ENCODE measurements at regions of chr7 and their contacts with region 1.

Region 1: GRCh38 chr7:134355927-134356326 is 39.2 kb upstream of the SLC35B4 start:
- DNase-seq: no peak

Region 2: DNA sequence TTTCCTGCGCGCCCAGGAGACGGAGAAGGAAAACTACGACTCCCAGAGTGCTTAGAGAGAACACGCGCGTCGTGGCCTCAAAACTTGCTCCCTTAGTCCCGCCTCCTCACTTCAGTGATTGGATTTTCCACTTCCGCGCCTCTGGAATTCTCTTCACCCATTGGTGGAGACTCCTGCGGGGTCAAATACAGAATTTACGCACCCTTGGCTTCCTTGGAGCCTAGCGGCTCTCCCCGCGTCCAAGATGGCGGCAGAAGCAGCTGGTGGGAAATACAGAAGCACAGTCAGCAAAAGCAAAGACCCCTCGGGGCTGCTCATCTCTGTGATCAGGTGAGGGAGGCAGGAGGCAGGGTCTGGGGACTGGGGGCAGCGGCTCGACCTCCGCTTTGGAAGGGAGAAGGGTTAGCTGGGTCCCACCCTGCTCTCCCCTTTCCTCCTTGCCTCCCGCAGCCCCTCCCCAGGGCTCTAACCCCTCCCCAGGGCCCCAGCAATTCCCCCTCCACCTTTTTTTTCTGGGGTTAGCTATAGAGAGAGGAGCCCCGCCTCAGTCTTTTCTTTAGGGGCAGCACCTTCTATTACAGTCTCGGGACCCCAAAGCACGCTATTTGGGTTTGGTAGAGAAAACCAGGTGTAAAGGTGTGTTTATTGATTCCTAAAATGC is 1102.9 kb before region 1 on chr7 and contains the start of gene EXOC4:
- intact Hi-C with region 1: no loop called
- DNase-seq: peak; percentile 94
- total RNA-seq, gene EXOC4: 66.0 to 70.6 TPM

Region 3: GRCh38 chr7:134613623-134614347 is 257.9 kb after region 1 on chr7:
- intact Hi-C with region 1: loop called in 1 of 2 experiments (anchors 10 kb)
- DNase-seq: no peak